Posterior cingulate gyrus (tissue), 11 donors: ENCODE measurements at regions of chr19 and their contacts with region 1.

Region 1: DNA sequence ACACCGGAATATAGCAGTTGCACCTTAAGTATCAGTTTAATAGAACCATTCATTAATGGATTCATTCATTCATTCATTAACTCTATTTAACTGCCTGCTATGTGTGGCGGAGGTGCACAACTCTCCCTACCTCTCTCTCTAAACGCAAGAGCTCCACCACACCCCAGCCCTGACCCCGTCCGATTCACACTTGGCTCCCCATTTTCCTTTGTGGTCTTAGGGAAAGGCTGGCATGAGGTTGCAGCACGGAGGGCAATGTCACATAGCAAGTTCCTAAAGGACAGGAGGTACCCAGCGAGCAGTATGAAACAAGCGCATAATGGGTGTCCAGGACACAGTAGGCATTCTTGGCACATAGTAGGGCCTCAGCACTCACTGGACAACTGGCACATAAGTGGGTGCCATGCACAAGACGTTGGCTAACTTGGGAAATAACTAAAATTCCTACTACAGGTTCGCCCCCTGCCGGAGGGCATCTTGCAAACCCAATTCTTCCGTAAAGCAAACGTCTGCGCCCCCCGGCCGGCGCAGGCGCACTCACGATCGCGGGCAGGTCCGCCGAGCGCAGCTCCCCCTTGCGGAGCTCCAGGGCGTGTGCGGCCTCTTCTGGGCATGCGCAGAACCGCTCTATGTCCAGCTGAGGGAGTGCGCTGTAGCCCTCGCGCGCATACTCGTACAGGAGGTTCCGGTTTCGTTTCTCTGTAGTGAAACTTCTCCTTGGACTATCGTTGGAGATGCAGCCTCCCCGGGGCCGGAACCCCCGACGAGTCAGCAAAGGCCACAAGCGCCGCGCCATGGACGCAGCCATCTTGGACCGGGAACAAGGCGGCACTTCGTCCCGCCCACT is at the start of gene SARS2:
- DNase-seq: peak; percentile 82 to 99 (median 88)

Region 2: DNA sequence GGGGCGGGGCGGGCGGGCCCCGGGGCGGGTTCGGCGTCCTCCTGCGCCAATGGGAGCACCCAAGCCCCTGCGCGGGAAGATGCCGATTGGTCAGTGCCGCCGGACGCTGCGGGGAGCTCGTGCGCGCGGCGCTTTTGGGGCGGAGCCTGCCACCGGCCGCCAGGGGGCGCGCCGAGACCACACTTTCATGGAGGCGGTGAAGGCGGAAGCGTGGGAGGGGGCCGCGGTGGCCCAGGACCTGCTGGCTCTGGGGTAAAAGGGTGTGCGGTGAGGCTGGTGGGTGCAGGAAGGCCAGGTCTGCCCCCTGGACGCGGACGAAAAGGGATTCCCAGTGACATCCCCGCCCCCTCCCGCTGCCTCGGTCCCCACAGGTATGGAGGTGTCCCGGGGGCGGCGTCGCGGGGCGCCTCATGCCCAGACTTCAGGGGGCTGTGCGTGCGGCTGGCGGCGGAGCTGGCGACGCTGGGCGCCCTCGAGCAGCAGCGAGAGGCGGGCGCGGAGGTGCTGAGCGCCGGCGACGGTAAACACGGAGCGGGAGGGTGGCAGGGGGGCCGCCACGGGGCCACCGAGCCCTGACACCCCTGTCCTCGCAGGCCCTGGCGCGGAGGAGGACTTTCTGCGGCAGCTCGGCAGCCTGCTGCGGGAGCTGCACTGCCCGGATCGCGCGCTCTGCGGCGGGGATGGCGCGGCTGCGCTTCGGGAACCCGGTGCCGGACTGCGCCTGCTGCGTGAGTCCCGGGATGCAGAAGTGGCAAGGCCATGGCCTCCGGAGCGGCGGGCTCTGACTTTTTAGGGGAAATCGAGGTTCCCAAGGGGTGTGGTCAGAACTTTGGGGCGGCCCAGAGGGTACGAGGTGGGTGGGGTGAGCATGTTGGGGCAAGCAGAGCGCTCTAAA is 526.9 kb before region 1 on chr19 and contains the start of gene FAM98C:
- intact Hi-C with region 1: loop called (anchors 10 kb)
- DNase-seq: peak; percentile 92 to 99 (median 96)

Region 3: DNA sequence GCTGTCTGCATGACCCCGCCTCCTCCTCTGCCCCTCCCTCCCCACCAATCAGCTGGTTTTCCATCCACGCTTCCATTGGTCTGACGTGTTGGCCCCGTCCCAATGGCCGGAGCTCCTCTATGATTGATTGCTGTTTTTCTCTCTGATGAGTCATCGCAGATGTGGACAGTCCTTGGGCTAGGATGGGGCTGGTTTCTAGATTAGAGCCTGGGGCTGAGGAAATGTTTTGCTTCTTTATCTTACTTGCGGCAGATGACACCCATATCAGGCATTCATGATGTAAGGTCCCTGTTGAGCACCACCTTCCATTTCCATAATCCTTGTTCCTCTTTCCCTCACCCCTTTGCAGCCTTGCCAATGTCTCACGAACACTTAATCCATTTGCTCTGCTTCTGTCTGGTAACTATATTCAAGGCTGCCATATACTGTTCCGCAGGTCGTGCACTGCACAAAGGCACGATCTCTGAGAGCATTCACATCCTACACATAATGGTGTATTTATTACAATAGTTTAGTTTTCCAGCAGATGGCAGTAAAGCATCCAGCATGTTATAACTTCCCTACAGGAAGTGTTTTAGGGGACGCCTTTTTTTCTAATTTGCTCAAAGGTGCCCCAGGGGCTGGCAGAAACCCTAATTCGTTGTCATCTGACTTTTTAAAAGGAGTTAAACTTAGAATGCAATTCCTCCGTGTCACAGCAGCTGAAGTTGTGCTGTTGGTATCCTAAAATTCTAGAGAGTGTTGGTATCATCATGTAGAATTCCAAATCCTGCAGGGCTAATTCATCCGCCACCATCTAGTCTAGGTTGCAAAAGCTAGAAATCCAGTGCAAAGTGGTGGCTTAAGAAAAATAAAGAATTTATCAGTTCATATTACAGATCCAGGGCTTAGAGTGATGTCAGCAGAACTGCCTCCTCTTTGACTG is 385.9 kb before region 1 on chr19:
- intact Hi-C with region 1: loop called (anchors 2 kb)
- DNase-seq: peak; percentile 69 to 98 (median 84)

Region 4: DNA sequence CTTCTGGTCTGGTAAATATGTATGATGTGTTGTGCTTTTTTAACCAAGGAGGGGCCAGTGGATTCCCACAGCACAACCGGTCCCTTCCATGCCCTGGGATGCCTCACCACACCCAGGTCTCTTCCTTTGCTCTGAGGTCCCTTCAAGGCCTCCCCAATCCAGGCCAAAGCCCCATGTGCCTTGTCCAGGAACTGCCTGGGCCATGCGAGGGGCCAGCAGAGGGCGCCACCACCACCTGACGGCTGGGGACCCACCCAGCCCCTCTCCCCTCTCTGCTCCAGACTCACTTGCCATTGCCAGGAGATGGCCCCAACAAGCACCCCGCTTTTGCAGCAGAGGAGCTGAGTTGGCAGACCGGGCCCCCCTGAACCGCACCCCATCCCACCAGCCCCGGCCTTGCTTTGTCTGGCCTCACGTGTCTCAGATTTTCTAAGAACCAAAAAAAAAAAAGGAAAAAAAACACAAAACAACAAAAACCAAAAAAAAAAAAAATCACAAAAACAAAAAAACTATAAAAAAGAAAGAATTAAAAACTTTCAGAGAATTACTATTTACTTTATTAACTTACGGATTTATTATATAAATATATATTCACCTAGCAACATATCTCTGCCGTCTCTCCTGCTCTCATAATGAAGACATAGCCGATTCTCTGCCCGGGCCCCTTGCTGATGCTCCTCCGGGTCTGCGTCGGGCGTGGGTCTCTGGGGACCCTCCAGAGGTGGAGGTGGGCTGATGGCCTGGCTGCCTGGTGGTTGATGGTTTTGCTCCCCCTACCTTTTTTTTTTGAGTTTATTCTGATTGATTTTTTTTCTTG is 200.3 kb before region 1 on chr19:
- intact Hi-C with region 1: loop called (anchors 1 kb)
- DNase-seq: peak in 6 of 10 donors; percentile 59 to 91 (median 77)

Region 5: GRCh38 chr19:38849860-38850435 is 80.2 kb before region 1 on chr19 and contains the start of gene HNRNPL:
- intact Hi-C with region 1: loop called (anchors 1 kb)
- DNase-seq: peak; percentile 98 to 100 (median 100)

Region 6: DNA sequence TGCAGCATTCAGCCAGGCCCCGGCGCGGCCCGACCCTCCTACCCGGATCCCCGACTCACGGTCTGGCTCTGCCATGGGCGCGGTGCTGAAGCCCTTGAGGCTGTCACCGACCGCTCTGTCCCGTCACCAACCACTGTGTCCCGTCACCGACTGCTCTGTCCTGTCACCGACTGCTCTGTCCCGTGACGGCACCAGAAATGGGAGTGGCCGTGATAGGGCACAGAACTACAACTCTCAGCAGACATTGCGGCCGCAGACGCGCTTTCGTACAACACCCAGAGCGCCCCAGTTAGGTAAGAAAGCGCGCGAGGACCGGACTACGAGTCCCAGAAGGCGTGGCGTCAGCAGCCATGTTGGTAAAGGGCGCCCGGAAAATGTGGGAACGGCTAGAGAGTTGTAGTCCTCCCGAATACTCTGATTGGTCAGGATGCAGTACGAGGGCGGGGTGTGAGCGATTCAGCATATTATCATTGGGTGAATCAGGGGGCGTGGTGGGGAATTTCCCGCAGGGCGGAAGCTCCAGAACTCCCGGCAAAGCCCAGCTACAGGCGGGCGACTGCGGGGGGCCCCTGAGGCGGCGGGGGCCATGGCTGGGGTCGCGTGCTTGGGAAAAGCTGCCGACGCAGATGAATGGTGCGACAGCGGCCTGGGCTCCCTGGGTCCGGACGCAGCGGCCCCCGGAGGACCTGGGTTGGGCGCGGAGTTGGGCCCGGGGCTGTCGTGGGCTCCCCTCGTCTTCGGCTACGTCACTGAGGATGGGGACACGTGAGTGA is 30.5 kb before region 1 on chr19 and contains the starts of genes NFKBIB and SIRT2:
- intact Hi-C with region 1: loop called (anchors 2 kb)
- DNase-seq: peak; percentile 99 to 100 (median 100)